ENCODE measurements at regions of chr3 and their contacts with region 1.

Region 1: DNA sequence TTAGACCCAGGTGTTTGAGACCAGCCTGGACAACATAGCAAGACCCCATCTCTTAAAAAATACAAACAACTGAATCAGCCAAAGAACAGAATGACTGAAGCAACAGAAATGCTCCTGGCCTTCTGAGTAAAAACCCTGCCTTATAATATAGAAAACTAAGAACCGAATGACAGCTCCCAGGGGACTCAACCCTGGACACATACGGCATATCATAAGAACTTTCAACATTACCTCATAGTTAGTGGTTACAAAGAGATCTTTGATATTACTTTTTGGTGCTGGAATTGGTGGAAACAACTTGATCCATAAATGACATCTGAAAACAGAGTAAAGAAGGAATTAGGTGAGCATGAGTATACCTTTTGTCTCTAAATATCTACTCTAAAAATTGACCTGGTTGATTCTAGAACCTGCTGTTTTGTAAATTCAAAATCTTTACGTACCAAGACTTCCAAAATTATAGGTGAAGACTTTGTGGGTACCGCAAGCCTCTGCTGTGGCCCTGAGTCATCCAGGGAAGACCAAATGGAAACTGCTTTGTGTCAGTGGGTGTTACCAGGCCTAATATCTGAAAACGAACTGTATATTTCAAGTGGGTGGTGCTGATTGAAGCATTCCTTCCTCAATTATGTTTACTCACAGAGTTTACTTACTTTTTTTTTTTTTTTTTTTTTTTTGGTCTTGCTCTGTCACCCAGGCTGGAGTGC is 35.5 kb downstream of the IL5RA start:
- DNase-seq: no peak
- ATAC-seq: no peak
- H3K4me3 ChIP-seq: no peak overlapping the region
- H3K27ac ChIP-seq: no peak overlapping the region
- H3K4me1 ChIP-seq: no peaks in the 10 kb centered on the region
- H3K27me3 ChIP-seq: peaks cover 0 to 6% (median 0%) of the 10 kb centered on the region in 7 donors
- CTCF ChIP-seq: no peak

Region 2: DNA sequence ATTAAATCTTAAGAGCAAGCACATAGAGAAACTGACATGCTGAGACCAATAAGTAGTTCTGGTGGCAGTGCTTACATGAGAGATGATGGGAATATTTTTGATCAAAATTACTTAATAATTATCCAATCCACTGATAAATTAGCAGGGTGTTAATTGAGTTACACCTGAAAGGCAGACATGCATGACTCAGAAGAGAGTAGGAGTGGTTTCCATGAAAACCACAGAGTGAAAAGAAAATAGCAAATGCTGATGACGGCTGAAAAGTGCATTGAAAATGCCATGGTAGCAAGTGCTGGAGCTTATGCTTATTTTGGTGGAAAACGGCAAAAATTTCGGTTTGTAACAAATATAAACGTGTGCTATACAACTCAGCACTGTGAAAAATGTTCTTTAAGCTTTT is 456.8 kb after region 1 on chr3:
- intact Hi-C with region 1: loop called in 1 of 10 experiments (anchors 10 kb)
- DNase-seq: no peak
- ATAC-seq: no peak
- H3K4me3 ChIP-seq: no peak overlapping the region
- H3K27ac ChIP-seq: no peak overlapping the region
- H3K4me1 ChIP-seq: no peaks in the 10 kb centered on the region
- H3K27me3 ChIP-seq: no peaks in the 10 kb centered on the region
- CTCF ChIP-seq: no peak